Naive thymus-derived CD4-positive, alpha-beta T cell (primary cell): ENCODE measurements at regions of chr2 and their contacts with region 1.

Region 1: DNA sequence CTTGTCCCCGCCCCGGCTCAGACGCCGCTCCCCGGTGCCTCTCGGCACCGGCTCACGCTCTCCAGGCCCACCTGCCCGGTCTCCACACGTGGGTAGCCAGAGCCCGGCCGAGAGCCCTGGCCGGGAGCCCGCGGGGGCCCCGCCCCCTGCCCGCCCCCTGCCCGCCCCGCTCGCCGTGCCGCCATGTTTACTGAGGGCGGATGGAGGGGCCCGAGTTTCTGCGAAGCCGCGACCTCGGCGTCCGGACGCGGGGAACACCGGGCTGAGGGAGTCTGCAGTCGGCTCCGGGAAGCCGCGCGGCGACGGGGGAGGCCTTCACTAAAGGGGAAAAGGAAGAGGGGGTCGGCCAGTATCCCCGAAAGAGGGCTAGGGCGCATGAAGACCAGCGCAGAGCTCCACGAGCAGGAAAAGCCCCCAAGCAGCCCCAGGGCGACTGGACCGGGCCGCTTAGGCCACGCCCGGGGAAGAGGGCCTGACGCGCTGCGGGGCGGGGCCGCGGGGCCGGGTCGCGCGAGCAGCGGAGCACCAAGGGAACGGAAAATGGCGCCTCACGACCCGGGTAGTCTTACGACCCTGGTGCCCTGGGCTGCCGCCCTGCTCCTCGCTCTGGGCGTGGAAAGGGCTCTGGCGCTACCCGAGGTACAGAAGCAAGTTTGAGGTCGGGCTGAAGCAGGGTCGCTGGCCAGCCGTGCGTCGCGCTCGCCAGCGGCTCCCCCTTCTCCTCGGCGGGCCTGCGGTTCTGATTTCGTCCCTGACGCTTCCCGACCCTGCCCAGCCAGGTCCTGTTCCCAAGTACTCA is at the starts of genes ATRAID and SLC5A6:
- DNase-seq: peak; percentile 86 to 93 (median 92)
- ATAC-seq: peak; percentile 93
- H3K4me3 ChIP-seq: peak within 1 kb of the TSS; percentile 91
- H3K4me3 Mint-ChIP-seq: peak within 1 kb of the TSS; percentile 89 to 100 (median 99)
- H3K27ac ChIP-seq: peak within 1 kb of the TSS; percentile 100
- H3K27ac Mint-ChIP-seq: peak within 1 kb of the TSS; percentile 99 to 100 (median 100)
- H3K4me1 ChIP-seq: peaks cover 14 to 17% of the 10 kb centered on the region in 2 donors
- H3K4me1 Mint-ChIP-seq: peaks cover 18 to 49% (median 42%) of the 10 kb centered on the region in 7 donors
- H3K27me3 ChIP-seq: no peaks in the 10 kb centered on the region
- H3K27me3 Mint-ChIP-seq: no peaks in the 10 kb centered on the region
- total RNA-seq, gene ATRAID: 71.0 to 113 (median 90.7) TPM
- total RNA-seq, gene SLC5A6: 25.6 to 203 (median 44.3) TPM

Region 2: DNA sequence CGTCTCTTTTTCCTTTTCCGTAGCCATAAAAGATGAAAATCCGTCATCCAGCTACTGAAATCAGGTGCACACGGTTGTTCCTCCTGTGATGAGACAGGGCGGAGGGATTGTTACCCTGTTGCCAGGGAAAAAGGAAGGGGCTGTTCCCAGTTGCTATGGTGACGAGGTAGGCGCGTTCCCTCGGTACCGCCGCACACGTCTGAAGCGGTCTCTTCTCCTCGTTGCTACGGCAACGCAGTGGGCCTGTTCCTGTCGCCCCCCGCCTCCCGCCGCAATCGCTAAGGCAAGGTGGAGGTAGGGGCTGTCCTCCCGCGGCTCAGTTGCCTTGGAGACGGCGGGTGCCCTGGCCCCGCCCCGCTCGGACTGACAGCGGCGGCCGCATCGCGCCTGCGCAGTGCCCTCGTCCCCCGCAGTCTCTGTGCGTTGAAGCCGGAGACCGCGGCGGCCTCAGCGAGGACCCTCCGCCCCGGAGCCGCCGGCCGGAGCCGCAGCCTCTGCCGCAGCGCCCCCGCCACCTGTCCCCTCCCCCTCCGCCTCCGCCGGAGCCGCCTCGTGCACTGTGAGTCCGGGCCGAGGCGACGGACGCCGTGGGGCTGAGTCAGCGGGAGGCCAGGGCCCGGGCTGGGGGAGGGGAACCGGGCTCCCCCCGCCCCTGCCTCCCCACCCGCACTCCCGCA is 241.6 kb before region 1 on chr2 and contains the start of gene MAPRE3:
- CTCF ChIA-PET with region 1: no interaction called
- POLR2A ChIA-PET with region 1: no interaction called
- intact Hi-C with region 1: loop called in 1 of 2 experiments (anchors 5 kb)
- DNase-seq: peak; percentile 71 to 93 (median 78)
- ATAC-seq: peak; percentile 93
- H3K4me3 ChIP-seq: peak within 1 kb of the TSS; percentile 89
- H3K4me3 Mint-ChIP-seq: peak within 1 kb of the TSS; percentile 83 to 97 (median 92)
- H3K27ac ChIP-seq: peak within 1 kb of the TSS; percentile 61
- H3K27ac Mint-ChIP-seq: peak within 1 kb of the TSS; percentile 56 to 96 (median 74)
- H3K4me1 ChIP-seq: peaks cover 0 to 12% of the 10 kb centered on the region in 2 donors
- H3K4me1 Mint-ChIP-seq: peaks cover 11 to 36% (median 25%) of the 10 kb centered on the region in 7 donors
- H3K27me3 ChIP-seq: no peaks in the 10 kb centered on the region
- H3K27me3 Mint-ChIP-seq: peaks cover 7 to 68% (median 13%) of the 10 kb centered on the region in 5 donors
- total RNA-seq, gene MAPRE3: 1.8 to 6.0 (median 4.5) TPM

Region 3: DNA sequence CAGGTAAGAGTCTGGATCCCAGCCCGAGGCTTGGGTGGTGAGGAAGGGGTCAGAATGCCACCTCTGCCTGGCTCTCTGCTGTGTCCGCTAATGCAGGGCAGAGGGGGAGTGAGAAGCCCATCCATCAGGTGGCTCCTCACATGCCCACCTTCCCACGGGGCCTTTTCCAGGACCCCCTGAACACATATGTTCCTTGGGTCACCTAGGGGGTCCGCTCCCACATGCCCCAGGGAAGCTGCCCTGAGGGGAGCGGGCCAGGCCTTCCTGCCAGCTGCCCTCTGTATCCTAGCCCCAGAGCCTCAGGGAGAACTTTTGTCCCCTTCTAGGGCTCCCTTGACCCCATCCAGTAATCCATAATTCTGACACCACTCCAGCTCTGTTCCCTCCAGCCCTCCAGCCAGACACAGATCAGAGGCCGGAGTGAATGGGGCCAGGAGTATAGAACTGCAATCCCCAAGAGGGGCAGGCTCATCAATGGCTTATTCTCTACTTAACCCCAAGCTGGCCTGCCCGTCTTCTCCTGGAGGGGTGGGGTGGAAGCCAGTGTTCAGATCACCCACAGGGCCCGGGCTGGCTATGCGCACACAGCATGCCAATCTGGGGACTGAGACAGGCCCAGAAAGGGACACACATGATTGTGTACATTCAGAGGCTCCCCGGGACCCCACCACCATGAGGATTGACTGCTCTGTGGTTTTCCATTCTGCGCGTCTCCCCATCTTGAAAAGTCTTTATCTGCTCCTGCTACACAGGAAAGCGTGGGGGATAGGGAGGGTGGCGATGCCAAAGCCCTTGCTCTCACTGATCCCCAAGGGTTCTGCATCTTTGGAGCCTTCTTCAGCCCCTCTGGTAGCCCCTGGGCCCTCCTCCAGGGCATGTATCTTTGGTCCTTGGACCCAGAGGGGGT is 132.5 kb before region 1 on chr2:
- CTCF ChIA-PET with region 1: no interaction called
- POLR2A ChIA-PET with region 1: interaction called, 16 read pairs
- intact Hi-C with region 1: loop called (anchors 1 kb)
- DNase-seq: no peak
- ATAC-seq: no peak
- H3K4me3 ChIP-seq: no peak overlapping the region
- H3K4me3 Mint-ChIP-seq: no peak overlapping the region
- H3K27ac ChIP-seq: no peak overlapping the region
- H3K27ac Mint-ChIP-seq: peak overlapping the region in 4 of 9 donors; percentile 79 to 97 (median 96)
- H3K4me1 ChIP-seq: peaks cover 18 to 32% of the 10 kb centered on the region in 2 donors
- H3K4me1 Mint-ChIP-seq: peaks cover 27 to 53% (median 45%) of the 10 kb centered on the region in 7 donors
- H3K27me3 ChIP-seq: no peaks in the 10 kb centered on the region
- H3K27me3 Mint-ChIP-seq: no peaks in the 10 kb centered on the region

Region 4: GRCh38 chr2:27356382-27357181 is 144.6 kb after region 1 on chr2 and contains the start of gene GTF3C2:
- CTCF ChIA-PET with region 1: no interaction called
- POLR2A ChIA-PET with region 1: interaction called, 3 read pairs
- intact Hi-C with region 1: loop called (anchors 1 to 5 kb)
- DNase-seq: peak; percentile 76 to 94 (median 92)
- ATAC-seq: peak; percentile 85
- H3K4me3 ChIP-seq: peak within 1 kb of the TSS; percentile 96
- H3K4me3 Mint-ChIP-seq: peak within 1 kb of the TSS; percentile 95 to 100 (median 98)
- H3K27ac ChIP-seq: peak within 1 kb of the TSS; percentile 91
- H3K27ac Mint-ChIP-seq: peak within 1 kb of the TSS; percentile 96 to 100 (median 99)
- H3K4me1 ChIP-seq: peaks cover 24 to 34% of the 10 kb centered on the region in 2 donors
- H3K4me1 Mint-ChIP-seq: peaks cover 38 to 63% (median 56%) of the 10 kb centered on the region in 7 donors
- H3K27me3 ChIP-seq: no peaks in the 10 kb centered on the region
- H3K27me3 Mint-ChIP-seq: no peaks in the 10 kb centered on the region
- total RNA-seq, gene GTF3C2: 68.0 to 106 (median 78.3) TPM